ENCODE measurements at regions of chr15 and their contacts with region 1.

Region 1: GRCh38 chr15:82530606-82531379 is 9.5 kb downstream of the RPS17 start:
- DNase-seq: peak; percentile 70 to 78 (median 77)
- H3K4me3 ChIP-seq: peak overlapping the region; percentile 33 to 48
- H3K4me3 Mint-ChIP-seq: peak overlapping the region; percentile 77 to 88 (median 80)
- H3K27ac ChIP-seq: peak overlapping the region; percentile 18
- H3K27ac Mint-ChIP-seq: peak overlapping the region in 6 of 7 donors; percentile 56 to 91 (median 80)
- H3K4me1 ChIP-seq: no peaks in the 10 kb centered on the region
- H3K4me1 Mint-ChIP-seq: peaks cover 4 to 8% (median 5%) of the 10 kb centered on the region in 4 donors
- H3K27me3 ChIP-seq: no peaks in the 10 kb centered on the region
- H3K27me3 Mint-ChIP-seq: no peaks in the 10 kb centered on the region

Region 2: DNA sequence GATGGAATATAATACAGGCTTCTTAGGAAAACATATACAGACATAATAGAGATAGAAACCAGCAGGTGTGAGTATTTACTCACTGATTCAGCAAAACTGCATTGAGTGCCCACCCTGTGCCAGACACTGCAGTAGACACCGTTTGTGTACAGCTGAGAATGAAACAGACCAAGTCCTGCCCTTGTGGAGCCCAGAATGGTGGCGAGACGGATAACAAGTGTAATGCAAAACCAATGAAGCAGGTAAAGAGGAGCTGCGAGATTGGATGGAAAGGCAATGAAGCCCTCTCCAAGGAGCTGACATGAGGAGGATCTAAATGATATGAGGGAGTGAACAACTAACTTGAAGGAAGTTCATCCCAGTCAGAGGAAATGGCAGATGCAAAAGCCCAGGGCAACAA is 741.4 kb before region 1 on chr15:
- CTCF ChIA-PET with region 1: no interaction called
- POLR2A ChIA-PET with region 1: no interaction called
- intact Hi-C with region 1: no loop called
- DNase-seq: no peak
- H3K4me3 ChIP-seq: no peak overlapping the region
- H3K4me3 Mint-ChIP-seq: no peak overlapping the region
- H3K27ac ChIP-seq: no peak overlapping the region
- H3K27ac Mint-ChIP-seq: peak overlapping the region in 1 of 7 donors; percentile 50
- H3K4me1 ChIP-seq: no peaks in the 10 kb centered on the region
- H3K4me1 Mint-ChIP-seq: no peaks in the 10 kb centered on the region
- H3K27me3 ChIP-seq: no peaks in the 10 kb centered on the region
- H3K27me3 Mint-ChIP-seq: peaks cover 6 to 21% of the 10 kb centered on the region in 2 donors

Region 3: DNA sequence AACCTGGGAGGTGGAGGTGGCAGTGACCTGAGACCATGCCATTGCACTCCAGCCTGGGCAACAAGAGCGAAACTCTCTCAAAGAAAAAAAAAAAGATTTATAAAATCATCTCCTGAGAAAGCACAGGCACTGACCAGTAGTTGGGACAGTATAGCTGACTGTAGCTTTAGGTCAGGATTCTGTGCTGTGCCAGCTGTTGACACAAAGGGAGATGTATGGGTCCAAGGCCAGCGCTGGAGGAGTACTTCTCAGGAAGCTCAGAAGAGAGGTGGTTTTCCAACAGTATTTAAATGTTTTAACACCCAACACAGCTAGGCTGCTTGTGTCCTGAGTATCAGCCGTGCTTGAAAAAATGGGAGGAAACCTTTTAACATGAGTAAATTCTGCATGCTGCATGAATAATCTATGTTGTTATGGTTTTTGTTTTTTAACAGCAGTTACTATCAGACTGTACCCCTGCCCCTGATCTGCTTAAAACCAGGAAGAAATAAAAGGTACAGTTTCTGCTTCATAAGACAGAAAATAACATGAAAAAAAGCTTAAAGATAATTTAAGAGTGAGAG is 461.7 kb after region 1 on chr15:
- CTCF ChIA-PET with region 1: interaction called, 10 read pairs
- POLR2A ChIA-PET with region 1: no interaction called
- intact Hi-C with region 1: no loop called
- DNase-seq: no peak
- H3K4me3 ChIP-seq: no peak overlapping the region
- H3K4me3 Mint-ChIP-seq: no peak overlapping the region
- H3K27ac ChIP-seq: no peak overlapping the region
- H3K27ac Mint-ChIP-seq: no peak overlapping the region
- H3K4me1 ChIP-seq: no peaks in the 10 kb centered on the region
- H3K4me1 Mint-ChIP-seq: peaks cover 0 to 6% (median under 1%) of the 10 kb centered on the region in 4 donors
- H3K27me3 ChIP-seq: no peaks in the 10 kb centered on the region
- H3K27me3 Mint-ChIP-seq: no peaks in the 10 kb centered on the region

Region 4: DNA sequence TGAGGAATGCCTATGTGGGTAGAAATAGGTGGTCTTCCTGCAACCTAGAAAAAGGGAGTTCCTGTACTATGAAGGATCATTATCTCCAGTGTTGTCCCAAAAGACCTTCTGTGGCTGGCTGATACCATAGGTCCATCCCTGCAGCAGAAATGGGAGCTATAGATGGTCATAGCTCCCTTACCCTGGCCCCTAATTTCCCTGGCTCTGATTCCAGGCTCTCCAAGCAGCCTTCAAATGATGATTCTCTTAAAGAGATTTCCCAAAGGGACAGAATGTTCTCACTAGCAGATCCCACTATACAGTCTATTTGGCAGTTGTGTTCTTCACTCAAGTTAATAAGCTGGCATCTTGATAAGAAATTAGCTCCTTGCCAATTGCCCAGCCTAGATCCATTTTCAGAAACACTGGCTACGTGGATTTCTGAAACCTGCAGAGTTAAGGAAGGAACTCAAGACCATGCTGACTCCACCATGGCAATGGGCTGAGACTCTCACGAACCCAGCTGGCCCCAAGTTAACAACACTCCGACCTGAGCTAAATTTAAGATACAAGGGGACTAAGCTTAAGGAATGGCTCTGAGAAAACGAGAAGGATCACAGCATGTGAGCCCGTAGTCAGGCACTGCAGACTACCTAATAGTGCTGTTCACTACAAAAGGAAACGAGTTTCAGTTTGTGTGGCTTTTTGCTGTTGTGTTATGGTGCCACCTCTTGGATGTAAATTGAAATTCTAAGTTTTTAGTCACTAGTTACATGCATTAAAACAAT is 469.3 kb after region 1 on chr15:
- CTCF ChIA-PET with region 1: interaction called, 12 read pairs
- POLR2A ChIA-PET with region 1: interaction called, 3 read pairs
- intact Hi-C with region 1: no loop called
- DNase-seq: peak in 4 of 5 donors; percentile 48 to 52 (median 50)
- H3K4me3 ChIP-seq: peak overlapping the region; percentile 1 to 48
- H3K4me3 Mint-ChIP-seq: peak overlapping the region in 7 of 8 donors; percentile 66 to 84 (median 79)
- H3K27ac ChIP-seq: peak overlapping the region; percentile 10
- H3K27ac Mint-ChIP-seq: peak overlapping the region; percentile 51 to 94 (median 89)
- H3K4me1 ChIP-seq: peaks cover 9% of the 10 kb centered on the region
- H3K4me1 Mint-ChIP-seq: peaks cover 6 to 12% (median 9%) of the 10 kb centered on the region in 4 donors
- H3K27me3 ChIP-seq: no peaks in the 10 kb centered on the region
- H3K27me3 Mint-ChIP-seq: no peaks in the 10 kb centered on the region

Measured in CD4-positive, alpha-beta memory T cell (primary cell).